Dendritic cell treated with granulocyte-macrophage colony-stimulating factor and Interleukin-4, amounts not matched to agents 40 ng/mL and 50 ng/mL, for 4 days (primary cell): ENCODE measurements at regions of chr3 and their contacts with region 1.

Region 1: GRCh38 chr3:168165390-168166269 is 69.9 kb upstream of the GOLIM4 start:
- H3K4me3 Mint-ChIP-seq: peak overlapping the region; percentile 4
- H3K27ac Mint-ChIP-seq: no peak overlapping the region
- H3K4me1 Mint-ChIP-seq: no peaks in the 10 kb centered on the region
- H3K27me3 Mint-ChIP-seq: no peaks in the 10 kb centered on the region

Region 2: GRCh38 chr3:167837466-167837865 is 328.2 kb before region 1 on chr3:
- intact Hi-C with region 1: loop called (anchors 5 kb)
- H3K4me3 Mint-ChIP-seq: no peak overlapping the region
- H3K27ac Mint-ChIP-seq: peak overlapping the region; percentile 28
- H3K4me1 Mint-ChIP-seq: peaks cover 6% of the 10 kb centered on the region
- H3K27me3 Mint-ChIP-seq: no peaks in the 10 kb centered on the region

Region 3: DNA sequence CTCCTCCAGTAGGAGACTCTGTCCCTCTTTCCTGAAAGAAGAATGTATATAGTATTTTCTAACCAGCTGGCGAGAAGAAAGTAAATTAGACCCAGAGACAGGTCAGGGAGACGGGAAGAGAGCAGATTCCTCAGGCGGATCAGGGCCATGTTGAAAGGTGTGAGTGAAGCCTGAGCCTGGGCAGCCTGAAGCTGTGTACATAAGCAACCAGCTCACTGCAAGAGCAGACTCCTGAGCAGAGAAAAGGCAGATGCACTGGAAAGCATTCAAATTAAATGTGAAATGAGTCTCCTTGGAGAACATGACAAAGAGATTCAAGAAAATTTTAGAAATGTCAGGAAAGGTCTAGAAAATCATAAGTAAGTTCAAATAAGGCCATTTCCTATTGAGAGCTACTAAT is 235.7 kb before region 1 on chr3:
- intact Hi-C with region 1: loop called (anchors 5 kb)
- H3K4me3 Mint-ChIP-seq: no peak overlapping the region
- H3K27ac Mint-ChIP-seq: no peak overlapping the region
- H3K4me1 Mint-ChIP-seq: no peaks in the 10 kb centered on the region
- H3K27me3 Mint-ChIP-seq: peaks cover 9% of the 10 kb centered on the region

Region 4: DNA sequence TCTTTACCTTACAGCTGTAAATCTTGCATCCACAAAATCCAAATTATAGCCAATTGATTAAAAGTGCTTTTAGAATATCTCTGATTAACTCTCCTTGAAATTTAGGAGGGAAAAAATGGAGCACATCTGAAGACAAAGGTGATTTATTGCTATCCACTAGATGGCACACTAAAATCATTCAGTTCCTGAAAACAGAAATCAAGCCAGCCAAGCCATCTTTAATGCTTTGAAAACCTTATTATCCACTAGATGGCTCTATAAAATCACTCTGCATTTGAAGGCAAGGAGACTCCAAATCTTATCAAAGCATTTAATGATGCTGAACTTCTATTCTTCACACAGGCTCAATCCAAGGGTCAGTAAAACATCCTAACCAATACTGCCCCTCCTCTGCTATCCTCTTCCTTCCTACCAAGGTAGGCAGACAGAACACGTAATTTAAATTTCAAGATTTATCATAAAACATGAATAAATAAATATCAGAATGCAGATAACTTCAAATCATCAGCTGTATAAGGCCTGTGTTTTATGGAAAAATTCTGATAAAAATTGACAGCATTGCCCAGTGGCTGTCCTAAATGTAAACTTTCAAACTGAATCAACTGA is 118.3 kb before region 1 on chr3:
- intact Hi-C with region 1: loop called (anchors 1 kb)
- H3K4me3 Mint-ChIP-seq: no peak overlapping the region
- H3K27ac Mint-ChIP-seq: no peak overlapping the region
- H3K4me1 Mint-ChIP-seq: peaks cover 23% of the 10 kb centered on the region
- H3K27me3 Mint-ChIP-seq: no peaks in the 10 kb centered on the region

Region 5: GRCh38 chr3:168095611-168096209 is 69.9 kb before region 1 on chr3 and contains the start of gene GOLIM4:
- intact Hi-C with region 1: loop called (anchors 2 kb)
- H3K4me3 Mint-ChIP-seq: peak within 1 kb of the TSS; percentile 92
- H3K27ac Mint-ChIP-seq: peak within 1 kb of the TSS; percentile 98
- H3K4me1 Mint-ChIP-seq: peaks cover 21% of the 10 kb centered on the region
- H3K27me3 Mint-ChIP-seq: no peaks in the 10 kb centered on the region

Region 6: GRCh38 chr3:168186293-168186983 is 20.8 kb after region 1 on chr3:
- intact Hi-C with region 1: no loop called
- H3K4me3 Mint-ChIP-seq: no peak overlapping the region
- H3K27ac Mint-ChIP-seq: no peak overlapping the region
- H3K4me1 Mint-ChIP-seq: no peaks in the 10 kb centered on the region
- H3K27me3 Mint-ChIP-seq: no peaks in the 10 kb centered on the region

Region 7: DNA sequence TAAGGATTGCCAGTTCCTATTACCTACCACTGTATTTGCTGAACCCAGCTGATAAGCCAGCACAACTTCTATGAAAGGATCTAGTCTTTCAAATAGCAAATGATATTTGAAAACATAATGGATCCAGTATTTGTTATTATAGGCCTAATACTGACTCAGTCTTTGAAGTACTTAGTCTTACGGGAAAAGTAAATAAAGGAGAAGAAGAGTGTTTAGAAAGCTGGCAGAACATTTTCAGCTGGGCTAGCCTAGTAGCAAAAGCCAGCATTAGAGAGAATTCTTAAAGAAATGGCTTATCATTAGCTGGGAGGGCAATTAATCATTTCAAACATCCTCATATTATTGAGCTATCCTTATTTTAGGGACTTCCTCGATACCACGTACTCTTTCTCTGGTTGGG is 31.5 kb after region 1 on chr3:
- intact Hi-C with region 1: no loop called
- H3K4me3 Mint-ChIP-seq: no peak overlapping the region
- H3K27ac Mint-ChIP-seq: no peak overlapping the region
- H3K4me1 Mint-ChIP-seq: no peaks in the 10 kb centered on the region
- H3K27me3 Mint-ChIP-seq: no peaks in the 10 kb centered on the region